Heart left ventricle (tissue), 16 donors: ENCODE measurements at regions of chr1 and their contacts with region 1.

Region 1: GRCh38 chr1:61184040-61184713 is 101.8 kb downstream of the NFIA start:
- DNase-seq: peak; percentile 92 to 96 (median 93)
- ATAC-seq: peak; percentile 92 to 96 (median 94)
- H3K4me3 ChIP-seq: peak overlapping the region in 11 of 12 donors; percentile 24 to 53 (median 42)
- H3K27ac ChIP-seq: peak overlapping the region; percentile 66 to 94 (median 88)
- H3K4me1 ChIP-seq: peaks cover 23 to 76% (median 58%) of the 10 kb centered on the region in 12 donors
- H3K27me3 ChIP-seq: no peaks in the 10 kb centered on the region
- CTCF ChIP-seq: no peak
- POLR2A ChIP-seq: no peak

Region 2: GRCh38 chr1:61056573-61057439 is 127.4 kb before region 1 on chr1:
- intact Hi-C with region 1: loop called in 6 of 10 experiments (anchors 2 to 10 kb)
- DNase-seq: peak; percentile 55 to 78 (median 61)
- ATAC-seq: peak; percentile 30 to 69 (median 61)
- H3K4me3 ChIP-seq: peak overlapping the region; percentile 38 to 92 (median 72)
- H3K27ac ChIP-seq: peak overlapping the region; percentile 68 to 99 (median 92)
- H3K4me1 ChIP-seq: peaks cover 0 to 57% (median 34%) of the 10 kb centered on the region in 12 donors
- H3K27me3 ChIP-seq: peaks cover 0 to 5% (median 0%) of the 10 kb centered on the region in 9 donors
- CTCF ChIP-seq: no peak
- POLR2A ChIP-seq: no peak

Region 3: DNA sequence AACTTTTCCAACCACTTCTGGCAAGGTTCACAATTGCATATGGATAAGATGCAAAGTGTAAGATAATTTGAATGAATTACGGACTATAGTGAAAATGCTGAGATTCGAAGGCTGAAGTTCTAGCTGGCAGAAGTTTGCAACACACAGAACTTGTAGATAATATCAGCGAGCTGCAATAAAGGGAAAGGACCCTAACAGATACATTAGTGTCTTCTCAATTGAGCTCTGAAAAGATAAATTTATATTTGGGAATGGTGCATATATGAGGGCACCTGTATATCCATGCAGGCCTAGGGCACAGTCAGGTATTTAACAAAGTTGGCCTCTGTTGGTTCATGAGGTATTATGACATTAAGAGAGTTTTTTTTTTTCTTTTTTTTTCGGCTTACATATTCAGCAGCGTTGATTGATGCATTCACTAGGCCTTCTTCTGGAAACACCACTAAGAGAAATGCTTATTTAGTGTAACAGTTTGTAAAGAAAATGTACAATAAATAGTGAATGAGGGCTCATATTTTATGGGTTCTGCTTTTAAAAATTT is 99.6 kb before region 1 on chr1:
- intact Hi-C with region 1: loop called in 8 of 10 experiments (anchors 2 to 5 kb)
- DNase-seq: no peak
- ATAC-seq: no peak
- H3K4me3 ChIP-seq: peak overlapping the region; percentile 68 to 95 (median 86)
- H3K27ac ChIP-seq: peak overlapping the region; percentile 94 to 99 (median 96)
- H3K4me1 ChIP-seq: peaks cover 5 to 66% (median 43%) of the 10 kb centered on the region in 12 donors
- H3K27me3 ChIP-seq: no peaks in the 10 kb centered on the region
- CTCF ChIP-seq: no peak
- POLR2A ChIP-seq: no peak

Region 4: GRCh38 chr1:61244114-61244513 is 59.9 kb after region 1 on chr1:
- intact Hi-C with region 1: loop called in 1 of 10 experiments (anchors 10 kb)
- DNase-seq: no peak
- ATAC-seq: peak in 3 of 4 donors; percentile 27 to 53 (median 51)
- H3K4me3 ChIP-seq: no peak overlapping the region
- H3K27ac ChIP-seq: peak overlapping the region in 9 of 12 donors; percentile 5 to 68 (median 34)
- H3K4me1 ChIP-seq: peaks cover 0 to 69% (median 50%) of the 10 kb centered on the region in 12 donors
- H3K27me3 ChIP-seq: no peaks in the 10 kb centered on the region
- CTCF ChIP-seq: no peak
- POLR2A ChIP-seq: no peak

Region 5: GRCh38 chr1:61337981-61338848 is 154.0 kb after region 1 on chr1:
- intact Hi-C with region 1: loop called in 6 of 10 experiments (anchors 5 to 10 kb)
- DNase-seq: peak in 4 of 5 donors; percentile 62 to 74 (median 72)
- ATAC-seq: peak; percentile 84 to 90 (median 87)
- H3K4me3 ChIP-seq: peak overlapping the region in 9 of 12 donors; percentile 3 to 45 (median 14)
- H3K27ac ChIP-seq: peak overlapping the region; percentile 42 to 86 (median 70)
- H3K4me1 ChIP-seq: peaks cover 2 to 56% (median 35%) of the 10 kb centered on the region in 12 donors
- H3K27me3 ChIP-seq: no peaks in the 10 kb centered on the region
- CTCF ChIP-seq: peak; percentile 48 to 76 (median 66)
- POLR2A ChIP-seq: no peak

Region 6: GRCh38 chr1:61436016-61436415 is 251.8 kb after region 1 on chr1:
- intact Hi-C with region 1: loop called in 1 of 10 experiments (anchors 10 kb)
- DNase-seq: no peak
- ATAC-seq: peak in 3 of 4 donors; percentile 10 to 55 (median 30)
- H3K4me3 ChIP-seq: no peak overlapping the region
- H3K27ac ChIP-seq: peak overlapping the region; percentile 32 to 84 (median 68)
- H3K4me1 ChIP-seq: peaks cover 7 to 64% (median 41%) of the 10 kb centered on the region in 12 donors
- H3K27me3 ChIP-seq: no peaks in the 10 kb centered on the region
- CTCF ChIP-seq: peak in 6 of 12 donors; percentile 7 to 38 (median 24)
- POLR2A ChIP-seq: no peak